Endothelial cell of umbilical vein (primary cell): ENCODE measurements at regions of chr19 and their contacts with region 1.

Region 1: GRCh38 chr19:3429581-3430080 is 50.7 kb downstream of the SMIM24 start:
- DNase-seq: peak; percentile 74
- H3K4me3 ChIP-seq: no peak overlapping the region
- H3K27ac ChIP-seq: no peak overlapping the region
- H3K4me1 ChIP-seq: peaks cover 24% of the 10 kb centered on the region
- H3K27me3 ChIP-seq: no peaks in the 10 kb centered on the region
- CTCF ChIP-seq: peak; percentile 93 to 98
- POLR2A ChIP-seq: no peak

Region 2: DNA sequence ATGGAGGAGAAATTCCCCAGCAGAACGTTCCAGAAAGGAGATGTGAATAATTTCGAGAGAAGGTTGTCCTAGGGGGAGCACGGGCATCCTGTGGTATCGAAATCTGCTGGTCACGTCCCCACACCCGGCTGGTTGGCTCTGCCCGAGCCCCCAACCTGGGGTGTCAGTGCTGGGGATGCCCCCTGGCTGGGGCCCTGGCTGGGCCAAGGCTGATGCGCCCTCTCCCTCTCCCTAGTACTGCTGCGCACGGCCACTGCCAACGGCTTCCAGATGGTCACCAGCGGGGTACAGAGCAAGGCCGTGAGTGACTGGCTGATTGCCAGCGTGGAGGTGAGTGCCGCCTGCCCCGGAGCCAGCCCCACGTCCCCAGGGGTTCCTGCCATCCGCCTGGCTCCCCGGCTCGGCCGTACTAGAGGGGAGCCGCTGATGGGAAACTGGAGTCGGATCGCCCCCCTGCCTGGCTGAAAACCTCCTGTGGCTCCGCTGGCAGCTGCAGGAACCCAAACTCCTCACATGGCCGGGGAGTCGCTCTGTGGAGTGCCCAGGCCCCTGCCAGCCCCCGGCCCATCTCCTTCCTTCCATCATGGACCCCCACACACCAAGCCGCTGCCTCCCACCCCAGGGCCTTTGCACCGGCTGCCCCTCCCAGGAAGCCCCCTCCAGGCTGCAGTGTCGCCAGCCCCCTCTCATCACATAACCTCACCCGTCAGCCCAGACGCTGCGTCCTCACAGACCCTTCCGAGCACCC is 233.5 kb before region 1 on chr19:
- CTCF ChIA-PET with region 1: no interaction called
- POLR2A ChIA-PET with region 1: no interaction called
- dilution Hi-C with region 1: no loop called
- intact Hi-C with region 1: no loop called
- DNase-seq: no peak
- H3K4me3 ChIP-seq: no peak overlapping the region
- H3K27ac ChIP-seq: no peak overlapping the region
- H3K4me1 ChIP-seq: no peaks in the 10 kb centered on the region
- H3K27me3 ChIP-seq: no peaks in the 10 kb centered on the region
- CTCF ChIP-seq: no peak
- POLR2A ChIP-seq: no peak

Region 3: GRCh38 chr19:3250675-3251074 is 179.0 kb before region 1 on chr19:
- CTCF ChIA-PET with region 1: no interaction called
- POLR2A ChIA-PET with region 1: no interaction called
- dilution Hi-C with region 1: no loop called
- intact Hi-C with region 1: no loop called
- DNase-seq: no peak
- H3K4me3 ChIP-seq: no peak overlapping the region
- H3K27ac ChIP-seq: no peak overlapping the region
- H3K4me1 ChIP-seq: no peaks in the 10 kb centered on the region
- H3K27me3 ChIP-seq: no peaks in the 10 kb centered on the region
- CTCF ChIP-seq: peak; percentile 24 to 57
- POLR2A ChIP-seq: no peak

Region 4: DNA sequence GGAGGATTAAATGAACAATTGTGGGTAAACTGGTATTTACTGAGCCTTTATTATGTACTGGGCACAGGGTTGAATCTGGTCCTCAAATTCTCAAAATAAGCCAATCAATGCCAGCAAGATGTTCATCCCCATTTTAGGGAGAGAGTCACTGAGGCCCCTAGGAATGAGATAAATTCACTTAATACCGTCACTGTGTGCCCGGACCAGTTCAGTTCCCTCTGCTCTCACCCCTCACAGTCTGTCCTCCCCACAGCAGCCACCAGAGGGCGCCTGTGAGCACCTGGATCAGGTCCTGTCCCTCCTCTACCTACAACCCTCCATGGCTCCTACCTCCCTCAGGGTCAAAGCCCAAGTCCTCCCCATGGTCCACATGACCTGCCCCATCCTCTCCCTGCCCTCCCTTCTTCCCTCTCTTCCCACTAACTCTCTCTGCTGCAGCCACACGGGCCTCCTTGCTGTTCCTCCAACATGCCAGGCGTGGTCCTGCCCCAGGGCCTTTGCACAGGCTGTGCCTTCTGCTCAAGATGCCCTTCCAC is 105.2 kb before region 1 on chr19:
- CTCF ChIA-PET with region 1: interaction called, 32 read pairs
- POLR2A ChIA-PET with region 1: no interaction called
- dilution Hi-C with region 1: no loop called
- intact Hi-C with region 1: loop called (anchors 1 kb)
- DNase-seq: peak; percentile 30
- H3K4me3 ChIP-seq: no peak overlapping the region
- H3K27ac ChIP-seq: no peak overlapping the region
- H3K4me1 ChIP-seq: no peaks in the 10 kb centered on the region
- H3K27me3 ChIP-seq: peaks cover 0 to 1% of the 10 kb centered on the region in 2 experiments
- CTCF ChIP-seq: peak; percentile 78 to 84
- POLR2A ChIP-seq: no peak

Region 5: DNA sequence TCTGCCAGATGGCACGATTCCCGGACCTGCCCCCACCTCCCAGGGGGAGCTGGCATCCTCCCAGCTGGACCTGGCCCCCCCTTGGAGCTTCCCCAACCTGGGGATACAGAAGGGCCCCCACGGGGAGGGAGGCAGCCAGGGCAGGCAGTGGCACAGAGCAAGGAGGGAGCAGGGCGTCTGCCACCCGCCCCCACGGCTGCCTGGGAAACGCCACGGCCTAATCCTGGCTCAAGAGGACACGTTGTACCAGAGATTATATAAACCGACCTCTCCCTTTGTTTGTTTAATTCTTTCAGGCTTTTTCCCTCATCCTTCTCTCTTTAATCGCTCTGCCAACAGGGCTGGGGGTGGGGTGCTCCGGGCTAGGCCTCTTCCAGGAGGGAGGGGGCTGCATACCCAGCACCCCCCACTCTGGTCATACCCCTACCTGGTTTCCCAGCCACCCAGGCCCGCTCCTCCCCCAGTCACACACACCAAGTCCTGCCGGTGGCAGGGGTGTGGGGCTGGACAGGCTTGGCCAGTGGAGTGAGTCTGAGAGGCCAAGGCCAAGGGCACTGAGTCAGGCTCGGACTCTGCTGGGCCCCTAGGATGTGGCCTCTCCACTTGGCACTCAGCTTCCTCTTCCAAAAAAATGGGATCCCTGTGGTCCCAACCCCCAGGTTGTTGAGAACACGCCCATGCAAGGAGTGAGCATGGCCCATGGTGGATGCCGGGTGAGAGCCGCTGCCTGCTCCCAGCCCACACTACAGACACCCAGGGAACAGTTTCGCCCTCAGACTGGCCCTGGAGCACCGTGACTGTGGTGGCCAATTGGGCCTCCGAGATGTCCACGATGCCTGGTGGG is 92.7 kb before region 1 on chr19:
- CTCF ChIA-PET with region 1: interaction called, 32 read pairs
- POLR2A ChIA-PET with region 1: no interaction called
- dilution Hi-C with region 1: no loop called
- intact Hi-C with region 1: no loop called
- DNase-seq: peak; percentile 33
- H3K4me3 ChIP-seq: no peak overlapping the region
- H3K27ac ChIP-seq: no peak overlapping the region
- H3K4me1 ChIP-seq: no peaks in the 10 kb centered on the region
- H3K27me3 ChIP-seq: no peaks in the 10 kb centered on the region
- CTCF ChIP-seq: no peak
- POLR2A ChIP-seq: no peak

Region 6: DNA sequence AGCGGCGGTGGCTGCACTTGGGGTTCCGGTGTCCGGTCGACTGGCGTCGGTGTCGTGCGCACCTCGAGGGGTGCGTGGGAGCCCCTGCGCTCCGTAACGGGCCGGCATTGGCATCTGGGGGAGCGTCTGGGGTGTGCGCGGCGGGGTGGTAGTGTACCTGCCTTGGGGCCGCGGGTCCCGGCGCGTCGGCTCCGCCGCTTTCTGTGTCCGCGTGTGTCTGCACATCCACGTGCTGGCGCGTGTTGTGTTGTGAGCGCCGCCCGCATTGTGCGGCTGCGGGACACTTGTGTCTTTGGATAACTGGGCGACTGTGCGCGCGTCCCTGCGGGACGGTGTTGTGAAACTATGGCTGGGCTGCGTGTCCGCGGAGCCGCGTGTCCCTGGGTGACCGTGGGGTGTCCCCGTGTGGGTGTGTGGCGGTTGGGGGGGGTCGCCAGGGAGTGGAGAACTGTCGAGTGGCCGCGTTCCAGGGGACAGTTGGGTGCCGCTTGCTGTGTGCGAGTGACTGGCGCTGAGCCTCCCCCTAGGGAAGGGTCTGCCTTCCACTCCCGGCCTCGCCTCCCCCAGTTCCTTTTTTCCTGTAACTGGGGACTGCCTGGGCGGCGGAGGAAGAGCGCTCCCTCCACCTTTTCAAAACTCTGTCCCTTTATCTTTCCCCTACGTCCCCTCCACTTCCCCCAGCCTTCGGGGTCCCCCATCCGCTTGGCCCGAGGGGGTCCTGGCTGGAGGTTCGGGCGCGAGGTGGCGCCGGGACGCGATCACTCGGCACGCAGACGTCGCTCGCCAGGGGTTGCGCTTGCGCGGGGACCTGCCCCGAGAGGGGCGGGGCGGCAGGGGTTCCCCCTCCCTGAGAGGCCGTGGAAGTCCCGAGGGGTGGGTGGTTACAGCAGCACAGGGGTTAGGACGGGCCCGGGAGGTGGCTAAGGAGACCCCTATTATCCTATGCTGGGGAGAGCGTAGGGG is 68.9 kb before region 1 on chr19:
- CTCF ChIA-PET with region 1: interaction called, 9 read pairs
- POLR2A ChIA-PET with region 1: interaction called, 3 read pairs
- dilution Hi-C with region 1: no loop called
- intact Hi-C with region 1: loop called (anchors 2 kb)
- DNase-seq: peak; percentile 47
- H3K4me3 ChIP-seq: peak overlapping the region; percentile 52 to 94 (median 68)
- H3K27ac ChIP-seq: no peak overlapping the region
- H3K4me1 ChIP-seq: peaks cover 16% of the 10 kb centered on the region
- H3K27me3 ChIP-seq: no peaks in the 10 kb centered on the region
- CTCF ChIP-seq: peak in 1 of 2 donors; percentile 1
- POLR2A ChIP-seq: peak; percentile 39

Region 7: DNA sequence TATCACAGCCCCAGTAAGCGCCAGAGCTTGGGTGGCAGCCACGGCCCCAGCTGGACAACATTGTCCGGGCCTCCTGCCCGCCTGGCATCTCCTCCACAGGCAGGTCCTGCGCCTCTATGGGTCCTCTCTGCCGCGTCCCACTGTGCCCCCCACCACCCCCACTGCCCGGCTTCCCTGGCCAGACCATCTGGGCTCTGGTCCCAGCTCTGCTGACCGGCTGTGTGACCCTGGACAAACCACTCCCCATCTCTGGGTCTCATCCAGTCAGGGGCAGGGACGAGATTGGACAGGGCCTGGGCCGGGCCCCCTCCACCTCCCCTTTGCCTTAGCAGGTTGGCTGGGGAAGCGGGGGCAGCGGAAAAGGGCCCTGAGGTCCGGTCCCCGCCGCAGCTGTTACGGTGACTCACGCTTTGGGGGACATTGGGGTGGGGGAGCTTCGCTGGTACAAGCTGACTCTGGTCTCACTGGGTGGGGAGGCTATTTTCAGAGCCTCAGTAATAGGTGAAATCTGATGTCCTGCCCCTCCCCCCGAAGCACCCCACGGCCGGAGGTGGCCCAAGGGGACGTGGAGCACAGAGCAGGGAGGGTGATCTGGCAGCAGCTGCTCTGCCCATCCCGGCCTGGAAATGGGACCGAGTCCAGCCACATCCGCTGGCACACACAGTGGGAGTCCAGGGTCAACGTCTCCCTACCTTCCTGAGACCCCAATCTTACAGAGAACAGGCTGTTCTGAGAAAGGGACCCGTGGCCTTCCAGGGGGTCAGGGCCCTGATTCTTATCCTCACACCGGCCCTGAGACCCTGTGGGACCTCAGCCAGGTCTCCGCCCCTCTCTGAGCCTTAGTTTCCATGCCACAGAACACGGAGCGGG is 54.2 kb before region 1 on chr19:
- CTCF ChIA-PET with region 1: interaction called, 34 read pairs
- POLR2A ChIA-PET with region 1: interaction called, 5 read pairs
- dilution Hi-C with region 1: no loop called
- intact Hi-C with region 1: no loop called
- DNase-seq: peak; percentile 83
- H3K4me3 ChIP-seq: no peak overlapping the region
- H3K27ac ChIP-seq: peak overlapping the region; percentile 46
- H3K4me1 ChIP-seq: peaks cover 21% of the 10 kb centered on the region
- H3K27me3 ChIP-seq: no peaks in the 10 kb centered on the region
- CTCF ChIP-seq: no peak
- POLR2A ChIP-seq: no peak

Region 8: DNA sequence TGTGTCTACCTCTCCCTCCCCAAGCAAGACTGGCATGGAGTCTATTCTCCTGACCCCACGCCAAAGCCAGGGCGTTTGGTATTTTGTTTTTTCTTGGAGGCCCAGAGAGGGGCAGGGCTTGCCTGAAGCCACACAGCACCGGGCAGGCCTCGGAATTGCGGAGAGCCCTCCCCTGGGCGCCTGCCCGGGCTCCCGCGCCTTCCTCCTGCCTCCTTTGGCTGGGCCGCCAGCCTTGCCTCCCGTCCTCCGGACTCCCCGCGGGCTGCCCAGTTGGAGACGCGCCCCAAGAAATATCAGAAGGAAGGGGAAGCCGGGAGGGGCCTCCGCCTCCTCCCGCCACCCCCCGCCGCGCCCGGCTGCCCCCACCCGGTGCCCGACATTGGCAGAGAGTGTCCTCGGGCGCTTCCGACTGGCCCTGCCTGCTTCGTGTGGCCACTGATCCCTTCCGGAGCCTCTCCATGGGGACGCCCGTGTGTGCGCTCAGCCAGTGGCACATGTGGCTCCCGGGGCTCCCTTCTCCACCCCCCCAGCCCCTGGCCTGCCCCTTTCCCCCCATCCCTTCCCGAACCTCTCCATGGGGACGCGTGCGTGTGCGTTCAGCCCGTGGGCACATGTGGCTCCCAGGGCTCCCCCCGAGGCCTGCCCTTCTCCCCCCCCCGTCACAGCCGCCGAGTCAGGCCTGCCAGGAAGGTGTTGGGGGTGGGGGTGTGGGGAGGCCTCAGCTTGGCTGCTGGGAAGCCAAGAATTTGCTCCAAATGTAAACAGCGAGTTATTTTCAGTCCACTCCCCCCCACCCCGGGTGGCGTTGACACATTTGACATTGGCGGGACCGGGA is 25.9 kb before region 1 on chr19:
- CTCF ChIA-PET with region 1: interaction called, 6 read pairs
- POLR2A ChIA-PET with region 1: no interaction called
- dilution Hi-C with region 1: no loop called
- intact Hi-C with region 1: loop called (anchors 1 kb)
- DNase-seq: peak; percentile 87
- H3K4me3 ChIP-seq: no peak overlapping the region
- H3K27ac ChIP-seq: peak overlapping the region; percentile 81
- H3K4me1 ChIP-seq: peaks cover 22% of the 10 kb centered on the region
- H3K27me3 ChIP-seq: no peaks in the 10 kb centered on the region
- CTCF ChIP-seq: no peak
- POLR2A ChIP-seq: no peak

Region 9: DNA sequence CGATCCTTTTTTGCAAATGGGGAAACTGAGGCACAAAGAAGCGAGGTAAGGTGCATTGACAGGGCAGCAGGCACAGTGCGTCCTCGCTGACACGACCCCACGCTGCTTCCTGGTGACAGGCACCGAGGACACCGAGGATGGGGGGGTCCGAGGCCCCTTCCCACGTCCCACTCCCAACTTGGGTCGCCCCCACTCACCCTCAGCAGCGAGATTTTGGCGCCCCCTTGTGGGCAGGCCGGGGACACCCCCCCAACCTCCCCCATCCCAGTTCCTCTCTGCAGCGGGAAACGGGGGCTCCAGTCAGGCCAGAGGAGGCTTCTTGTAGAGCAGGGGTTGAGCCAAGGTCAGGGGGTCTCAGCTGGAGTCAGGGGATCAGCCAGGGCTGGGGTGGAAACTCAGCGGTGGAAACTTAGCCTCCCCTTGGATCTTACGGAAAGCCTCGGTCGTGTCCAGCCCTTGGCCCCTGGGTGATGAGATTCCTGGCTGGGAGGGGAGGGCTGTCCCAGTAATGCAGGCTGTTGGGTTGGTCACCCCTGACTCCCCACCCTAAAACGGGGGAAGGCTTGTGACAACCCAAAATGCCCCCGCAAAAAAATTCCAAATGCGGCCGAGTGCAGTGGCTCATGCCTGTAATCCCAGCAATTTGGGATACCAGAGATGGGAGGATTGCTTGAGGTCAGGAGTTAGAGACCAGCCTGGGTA is 42.5 kb after region 1 on chr19:
- CTCF ChIA-PET with region 1: interaction called, 11 read pairs
- POLR2A ChIA-PET with region 1: no interaction called
- dilution Hi-C with region 1: no loop called
- intact Hi-C with region 1: loop called (anchors 1 kb)
- DNase-seq: peak; percentile 29
- H3K4me3 ChIP-seq: no peak overlapping the region
- H3K27ac ChIP-seq: no peak overlapping the region
- H3K4me1 ChIP-seq: no peaks in the 10 kb centered on the region
- H3K27me3 ChIP-seq: no peaks in the 10 kb centered on the region
- CTCF ChIP-seq: peak; percentile 83 to 90
- POLR2A ChIP-seq: no peak